IMR-90 (cell line): ENCODE measurements at regions of chr9 and their contacts with region 1.

Region 1: DNA sequence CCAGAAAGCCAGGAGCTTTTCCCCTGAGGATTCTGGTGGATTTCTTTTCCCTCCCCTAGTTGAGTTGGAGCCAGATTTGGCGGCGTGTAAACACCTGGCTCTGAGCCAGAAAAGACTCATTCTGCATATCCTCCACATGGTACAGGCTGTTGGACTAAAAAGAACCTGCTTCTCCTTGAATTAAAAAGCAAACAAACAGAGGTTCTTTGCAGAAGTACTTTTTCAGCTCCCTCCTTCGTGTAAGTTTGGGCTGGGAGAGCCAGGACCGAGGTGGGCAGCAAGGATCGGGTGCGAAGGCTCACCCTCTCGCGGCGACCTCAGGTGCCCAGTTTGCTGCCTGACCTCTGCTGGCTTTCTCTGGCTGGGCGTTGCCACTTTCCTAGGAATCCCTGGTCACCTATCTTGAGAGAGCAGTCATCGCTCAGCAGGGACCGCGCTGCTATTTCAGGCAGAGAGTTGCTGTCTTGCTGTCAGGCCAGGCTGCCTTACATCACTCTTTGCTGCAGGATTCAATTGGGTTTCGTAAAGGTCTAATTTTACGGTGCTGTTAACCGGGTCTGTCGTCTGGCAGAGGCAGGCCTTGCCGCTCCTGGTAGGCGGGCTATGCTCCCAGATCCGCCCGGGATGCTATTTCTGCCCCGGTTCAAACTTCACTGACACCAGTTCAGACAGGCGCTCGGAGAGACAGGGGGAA is 3.2 kb downstream of the PAPPA start:
- DNase-seq: peak; percentile 78
- ATAC-seq: peak; percentile 25
- H3K4me3 ChIP-seq: peak overlapping the region; percentile 46
- H3K27ac ChIP-seq: peak overlapping the region; percentile 76
- H3K4me1 ChIP-seq: peaks cover 12% of the 10 kb centered on the region
- H3K27me3 ChIP-seq: no peaks in the 10 kb centered on the region
- CTCF ChIP-seq: no peak
- POLR2A ChIP-seq: no peak
- RAD21 ChIP-seq: no peak

Region 2: GRCh38 chr9:115058684-115059315 is 1098.0 kb before region 1 on chr9:
- CTCF ChIA-PET with region 1: no interaction called
- POLR2A ChIA-PET with region 1: no interaction called
- dilution Hi-C with region 1: no loop called
- in situ Hi-C with region 1: no loop called
- intact Hi-C with region 1: no loop called
- DNase-seq: peak; percentile 83
- ATAC-seq: peak; percentile 83
- H3K4me3 ChIP-seq: no peak overlapping the region
- H3K27ac ChIP-seq: peak overlapping the region; percentile 60; the same call in 1 of the 2 replicates
- H3K4me1 ChIP-seq: peaks cover 17% of the 10 kb centered on the region
- H3K27me3 ChIP-seq: no peaks in the 10 kb centered on the region
- CTCF ChIP-seq: no peak
- POLR2A ChIP-seq: no peak
- RAD21 ChIP-seq: no peak

Region 3: DNA sequence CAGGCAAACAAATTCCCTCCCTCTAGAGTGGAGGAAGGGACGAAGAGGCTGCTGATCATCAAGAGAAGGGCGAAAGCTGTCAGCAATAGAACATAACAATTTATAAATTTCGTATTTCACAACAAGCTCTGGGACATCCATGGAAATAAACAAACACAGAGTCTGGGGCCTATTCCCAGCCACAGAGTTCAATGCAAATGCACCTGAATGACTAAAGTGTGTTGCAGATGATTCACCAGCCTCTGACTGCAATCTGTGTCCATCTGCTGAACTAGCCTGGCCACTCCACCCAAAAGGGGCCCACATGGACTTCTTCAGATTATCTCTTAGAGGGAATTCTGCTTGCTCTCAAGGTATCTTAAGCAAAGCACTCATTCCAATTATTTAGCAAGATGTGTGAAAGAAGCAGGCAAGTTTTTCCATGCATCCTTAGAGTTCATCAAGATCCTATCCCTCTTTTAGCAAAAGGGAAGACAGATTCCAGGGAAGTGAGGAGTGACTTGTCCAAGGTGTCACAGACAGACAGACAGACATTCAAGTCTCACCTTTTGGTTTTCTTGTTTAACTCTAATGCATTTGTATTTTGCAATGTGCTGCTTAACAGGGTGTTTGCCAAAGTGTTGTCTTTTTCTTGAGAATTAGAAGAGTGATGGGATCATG is 311.0 kb before region 1 on chr9:
- CTCF ChIA-PET with region 1: no interaction called
- POLR2A ChIA-PET with region 1: no interaction called
- dilution Hi-C with region 1: no loop called
- in situ Hi-C with region 1: no loop called
- intact Hi-C with region 1: loop called (anchors 5 kb)
- DNase-seq: peak; percentile 92
- ATAC-seq: peak; percentile 82
- H3K4me3 ChIP-seq: no peak overlapping the region
- H3K27ac ChIP-seq: no peak overlapping the region
- H3K4me1 ChIP-seq: peaks cover 6% of the 10 kb centered on the region
- H3K27me3 ChIP-seq: no peaks in the 10 kb centered on the region
- CTCF ChIP-seq: no peak
- POLR2A ChIP-seq: no peak
- RAD21 ChIP-seq: no peak

Region 4: DNA sequence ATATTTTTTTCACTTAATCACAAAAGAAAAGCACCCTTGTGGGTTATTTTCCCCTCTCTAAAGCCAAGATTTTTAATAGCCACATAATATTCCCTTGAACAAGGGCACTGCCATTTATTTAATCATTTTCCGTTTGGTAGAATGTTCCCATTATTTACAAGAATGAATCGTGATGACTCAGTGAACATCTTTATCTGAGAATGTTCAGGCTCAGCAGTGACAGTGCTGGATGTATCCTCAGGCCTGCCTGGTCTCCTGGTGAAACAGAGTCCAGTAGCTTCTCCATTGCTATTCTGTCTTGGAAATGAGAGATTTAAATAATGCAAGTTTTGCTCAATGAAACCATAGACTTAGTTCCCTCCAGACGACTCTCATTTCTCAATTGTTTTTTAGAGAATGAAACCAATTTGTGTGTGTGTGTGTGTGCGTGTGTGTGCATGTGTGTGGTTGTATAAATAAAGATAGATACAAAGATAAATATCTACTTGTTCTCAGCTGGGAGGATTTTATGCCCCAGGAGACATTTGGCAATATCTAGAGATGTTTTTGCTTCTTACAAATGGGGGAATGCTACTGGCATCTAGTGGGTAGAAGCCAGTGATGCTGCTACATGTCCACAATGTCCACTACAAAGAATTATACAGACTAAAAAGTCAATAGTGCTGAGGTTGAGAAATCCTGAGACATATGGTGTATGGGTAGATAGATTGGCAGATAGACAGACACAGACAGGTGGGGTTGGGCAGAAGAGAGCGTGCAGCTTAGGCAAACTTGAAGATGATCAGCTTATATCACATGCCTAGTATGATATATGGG is 51.9 kb after region 1 on chr9:
- CTCF ChIA-PET with region 1: interaction called, 4 read pairs
- POLR2A ChIA-PET with region 1: no interaction called
- dilution Hi-C with region 1: no loop called
- in situ Hi-C with region 1: no loop called
- intact Hi-C with region 1: loop called (anchors 2 kb)
- DNase-seq: peak; percentile 76
- ATAC-seq: peak; percentile 63
- H3K4me3 ChIP-seq: no peak overlapping the region
- H3K27ac ChIP-seq: peak overlapping the region; percentile 39; the same call in 1 of the 2 replicates
- H3K4me1 ChIP-seq: peaks cover 2% of the 10 kb centered on the region; the same call in 1 of the 2 replicates
- H3K27me3 ChIP-seq: no peaks in the 10 kb centered on the region
- CTCF ChIP-seq: peak; percentile 37
- POLR2A ChIP-seq: no peak
- RAD21 ChIP-seq: peak; percentile 50